Posterior vena cava (tissue), 2 donors: ENCODE measurements at regions of chr5 and their contacts with region 1.

Region 1: DNA sequence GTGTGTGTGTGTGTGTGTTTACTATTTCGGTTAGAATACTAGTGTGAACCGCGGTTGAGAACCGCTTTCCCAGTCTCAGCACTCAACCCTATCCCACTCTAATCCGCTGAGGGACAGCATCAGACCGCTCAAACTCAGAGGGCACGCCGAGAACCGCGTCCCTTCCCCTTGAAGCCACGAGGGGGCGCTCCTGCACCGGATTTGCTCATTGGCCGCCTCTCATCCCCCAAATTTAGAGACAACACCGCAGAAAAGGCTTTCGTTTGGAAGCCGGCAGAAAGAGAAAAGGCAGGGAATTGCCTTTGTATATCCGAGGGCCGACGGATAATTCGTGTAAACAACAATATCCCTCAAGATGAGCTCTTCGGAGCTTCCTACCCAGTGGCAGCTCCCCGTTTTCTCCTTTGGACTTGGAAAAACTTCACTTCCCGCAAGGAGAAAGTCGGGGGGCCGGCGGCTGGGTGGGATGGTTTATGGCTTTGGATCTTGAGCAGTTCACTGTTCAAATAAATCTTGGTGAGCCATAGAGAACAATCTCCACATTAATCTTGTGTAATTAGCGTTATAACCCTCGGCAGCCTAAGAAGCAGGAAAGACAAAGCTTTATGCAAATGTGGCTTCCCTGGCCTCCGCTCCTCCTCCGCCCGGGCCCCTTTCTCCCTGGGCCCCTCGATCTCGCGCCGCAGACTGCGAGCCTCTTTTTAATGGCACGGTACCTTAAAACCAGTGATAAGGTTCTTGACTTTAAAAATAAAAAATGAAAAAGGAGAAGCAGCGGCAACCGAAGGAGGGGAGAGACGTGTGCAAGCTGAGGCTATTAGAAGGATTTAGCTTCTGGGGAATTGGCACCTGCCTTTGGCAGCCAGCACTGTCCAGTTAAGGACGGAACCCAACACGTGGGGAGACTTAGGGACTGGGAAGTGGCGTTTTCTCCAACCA is 296.8 kb downstream of the PARP8 start:
- DNase-seq: no peak

Region 2: DNA sequence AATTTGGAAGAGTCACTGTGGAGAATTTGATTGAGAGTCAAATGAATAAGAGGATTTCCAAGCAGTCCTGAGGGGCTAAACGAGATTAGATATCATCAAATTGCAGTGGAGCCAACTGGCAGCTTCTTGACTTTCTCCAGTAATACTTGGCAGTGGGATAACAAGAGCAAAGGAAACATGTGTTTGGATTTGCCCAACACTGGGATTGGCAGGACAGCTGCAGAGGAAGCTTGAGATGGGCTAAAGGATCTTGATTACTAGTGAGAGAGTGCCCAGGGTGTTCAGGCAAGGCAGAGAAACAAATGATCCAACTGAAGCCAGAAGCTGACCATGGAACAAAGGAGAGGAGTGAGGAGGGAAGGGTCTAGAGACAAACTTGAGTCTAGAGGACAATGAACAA is 64.1 kb after region 1 on chr5:
- intact Hi-C with region 1: no loop called
- DNase-seq: no peak

Region 3: GRCh38 chr5:52657247-52657645 is 1694.0 kb after region 1 on chr5:
- intact Hi-C with region 1: loop called in 1 of 2 experiments (anchors 10 kb)
- DNase-seq: no peak